ENCODE measurements at regions of chr2 and their contacts with region 1.

Region 1: GRCh38 chr2:6922201-6922685 is 5.0 kb downstream of the RNF144A start:
- DNase-seq: peak; percentile 84
- ATAC-seq: peak; percentile 71
- H3K4me3 ChIP-seq: peak overlapping the region; percentile 43 to 61 (median 45)
- H3K27ac ChIP-seq: peak overlapping the region; percentile 57
- H3K4me1 ChIP-seq: peaks cover 68% of the 10 kb centered on the region
- H3K27me3 ChIP-seq: no peaks in the 10 kb centered on the region
- CTCF ChIP-seq: peak; percentile 57
- EP300 ChIP-seq: peak in 1 of 2 experiments; percentile 46; a peak in 1 of 4 replicates
- POLR2A ChIP-seq: 0 out of 4 replicates have a peak, but pooled peaks of 1 of the 2 experiments have one; percentile 4
- RAD21 ChIP-seq: no peak

Region 2: GRCh38 chr2:6957910-6958615 is 35.8 kb after region 1 on chr2:
- CTCF ChIA-PET with region 1: no interaction called
- POLR2A ChIA-PET with region 1: interaction called, 5 read pairs
- in situ Hi-C with region 1: no loop called
- intact Hi-C with region 1: loop called (anchors 5 kb)
- DNase-seq: no peak
- ATAC-seq: no peak; the same call in 2 of the 3 replicates
- H3K4me3 ChIP-seq: no peak overlapping the region
- H3K27ac ChIP-seq: no peak overlapping the region
- H3K4me1 ChIP-seq: peaks cover 29% of the 10 kb centered on the region
- H3K27me3 ChIP-seq: no peaks in the 10 kb centered on the region
- CTCF ChIP-seq: no peak
- EP300 ChIP-seq: no peak
- POLR2A ChIP-seq: no peak
- RAD21 ChIP-seq: no peak

Region 3: GRCh38 chr2:6986301-6987176 is 64.3 kb after region 1 on chr2:
- CTCF ChIA-PET with region 1: no interaction called
- POLR2A ChIA-PET with region 1: no interaction called
- in situ Hi-C with region 1: no loop called
- intact Hi-C with region 1: loop called (anchors 1 kb)
- DNase-seq: peak; percentile 61
- ATAC-seq: peak; percentile 82
- H3K4me3 ChIP-seq: no peak overlapping the region
- H3K27ac ChIP-seq: no peak overlapping the region
- H3K4me1 ChIP-seq: peaks cover 19% of the 10 kb centered on the region
- H3K27me3 ChIP-seq: no peaks in the 10 kb centered on the region
- CTCF ChIP-seq: no peak
- EP300 ChIP-seq: no peak
- POLR2A ChIP-seq: no peak
- RAD21 ChIP-seq: no peak

Region 4: GRCh38 chr2:7031547-7032245 is 109.5 kb after region 1 on chr2:
- CTCF ChIA-PET with region 1: no interaction called
- POLR2A ChIA-PET with region 1: interaction called, 3 read pairs
- in situ Hi-C with region 1: no loop called
- intact Hi-C with region 1: loop called (anchors 2 kb)
- DNase-seq: peak; percentile 98
- ATAC-seq: peak; percentile 82
- H3K4me3 ChIP-seq: no peak overlapping the region
- H3K27ac ChIP-seq: no peak overlapping the region
- H3K4me1 ChIP-seq: peaks cover 37% of the 10 kb centered on the region
- H3K27me3 ChIP-seq: no peaks in the 10 kb centered on the region
- CTCF ChIP-seq: peak; percentile 81
- EP300 ChIP-seq: peak; percentile 86 to 92; a peak in 3 of 4 replicates
- POLR2A ChIP-seq: no peak
- RAD21 ChIP-seq: no peak

Region 5: GRCh38 chr2:7083577-7084509 is 161.6 kb after region 1 on chr2:
- CTCF ChIA-PET with region 1: no interaction called
- POLR2A ChIA-PET with region 1: no interaction called
- in situ Hi-C with region 1: no loop called
- intact Hi-C with region 1: loop called (anchors 5 kb)
- DNase-seq: peak; percentile 45
- ATAC-seq: peak; percentile 98
- H3K4me3 ChIP-seq: no peak overlapping the region
- H3K27ac ChIP-seq: no peak overlapping the region
- H3K4me1 ChIP-seq: 0 out of 2 replicates have a peak, but pooled peaks cover 5% of the 10 kb centered on the region
- H3K27me3 ChIP-seq: no peaks in the 10 kb centered on the region
- CTCF ChIP-seq: peak; percentile 91
- EP300 ChIP-seq: no peak
- POLR2A ChIP-seq: no peak
- RAD21 ChIP-seq: peak; percentile 73

Measured in HepG2 (cell line).